HCT116 (cell line): ENCODE measurements at regions of chr10 and their contacts with region 1.

Region 1: GRCh38 chr10:23516530-23516929 is 77.7 kb downstream of the OTUD1 start:
- DNase-seq: no peak
- ATAC-seq: peak; percentile 62; the same call in 1 of the 2 replicates
- H3K4me3 ChIP-seq: no peak overlapping the region
- H3K27ac ChIP-seq: no peak overlapping the region
- H3K4me1 ChIP-seq: peaks cover 3 to 18% of the 10 kb centered on the region in 2 experiments; a peak in 3 of 4 replicates
- H3K27me3 ChIP-seq: peaks cover 37% of the 10 kb centered on the region
- CTCF ChIP-seq: peak; percentile 41 to 58 (median 54); a peak in 5 of 6 replicates
- POLR2A ChIP-seq: no peak
- RAD21 ChIP-seq: peak; percentile 62

Region 2: GRCh38 chr10:23656735-23657134 is 140.2 kb after region 1 on chr10:
- CTCF ChIA-PET with region 1: no interaction called
- POLR2A ChIA-PET with region 1: no interaction called
- RAD21 ChIA-PET with region 1: no interaction called
- intact Hi-C with region 1: loop called (anchors 5 kb)
- DNase-seq: no peak
- ATAC-seq: no peak
- H3K4me3 ChIP-seq: no peak overlapping the region
- H3K27ac ChIP-seq: no peak overlapping the region
- H3K4me1 ChIP-seq: no peaks in the 10 kb centered on the region
- H3K27me3 ChIP-seq: no peaks in the 10 kb centered on the region
- CTCF ChIP-seq: peak; percentile 20 to 58 (median 48); a peak in 5 of 6 replicates
- POLR2A ChIP-seq: no peak
- RAD21 ChIP-seq: peak; percentile 39; the same call in 1 of the 2 replicates

Region 3: DNA sequence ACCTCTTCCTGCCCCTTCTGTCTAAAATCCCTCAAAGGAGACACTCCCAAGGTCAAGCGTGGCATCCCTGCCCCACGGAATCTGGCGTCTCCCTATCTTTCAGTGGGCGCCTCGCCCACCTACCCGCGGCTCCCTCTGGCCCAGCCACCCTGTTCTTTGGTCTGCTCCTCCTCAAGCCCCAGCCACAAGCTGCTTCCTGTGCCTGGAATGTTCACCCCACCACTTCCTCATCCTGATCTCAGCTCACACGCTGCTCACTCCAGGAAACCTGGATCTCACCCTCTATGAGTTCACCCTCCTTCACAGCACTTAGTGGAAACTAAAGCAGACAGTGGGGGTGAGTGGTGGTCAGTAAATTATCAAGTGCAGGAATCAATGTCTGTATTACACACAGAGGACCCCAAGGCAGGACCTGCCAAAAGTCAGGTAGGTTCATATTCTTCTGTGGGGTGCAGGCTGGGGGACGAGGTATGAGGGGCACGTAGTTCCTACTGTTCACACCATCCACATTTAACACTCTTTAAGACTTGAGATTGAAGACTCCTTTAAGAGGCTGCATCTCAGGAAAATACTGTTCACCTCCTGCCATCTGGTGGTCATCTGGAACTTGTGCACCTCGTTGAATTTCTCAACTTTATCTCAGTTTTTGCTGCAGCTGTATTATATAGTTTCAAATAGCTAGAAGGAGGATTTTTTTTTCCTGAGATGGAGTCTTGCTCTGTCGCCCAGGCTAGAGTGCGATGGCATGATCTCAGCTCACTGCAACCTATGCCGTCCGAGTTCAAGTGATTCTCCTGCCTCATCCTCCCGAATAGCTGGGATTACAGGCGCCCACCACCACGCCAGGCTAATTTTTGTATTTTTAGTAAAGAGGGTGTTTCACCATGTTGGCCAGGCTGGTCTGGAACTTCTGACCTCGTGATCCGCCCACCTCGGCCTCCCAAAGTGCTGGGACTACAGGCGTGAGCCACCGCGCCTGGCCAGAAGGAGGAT is 1040.5 kb after region 1 on chr10:
- CTCF ChIA-PET with region 1: no interaction called
- POLR2A ChIA-PET with region 1: no interaction called
- RAD21 ChIA-PET with region 1: no interaction called
- intact Hi-C with region 1: loop called (anchors 10 kb)
- DNase-seq: peak; percentile 66
- ATAC-seq: peak; percentile 52
- H3K4me3 ChIP-seq: no peak overlapping the region
- H3K27ac ChIP-seq: no peak overlapping the region
- H3K4me1 ChIP-seq: peaks cover 4 to 18% of the 10 kb centered on the region in 2 experiments; a peak in 3 of 4 replicates
- H3K27me3 ChIP-seq: no peaks in the 10 kb centered on the region
- CTCF ChIP-seq: peak; percentile 57 to 78 (median 64); a peak in 5 of 6 replicates
- POLR2A ChIP-seq: no peak
- RAD21 ChIP-seq: peak; percentile 76